ENCODE measurements at regions of chr14 and their contacts with region 1.

Region 1: GRCh38 chr14:77111043-77111442 is 13.0 kb downstream of the CIPC start:
- DNase-seq: no peak
- H3K4me3 Mint-ChIP-seq: no peak overlapping the region
- H3K27ac Mint-ChIP-seq: no peak overlapping the region
- H3K4me1 Mint-ChIP-seq: no peaks in the 10 kb centered on the region
- H3K27me3 Mint-ChIP-seq: no peaks in the 10 kb centered on the region

Region 2: DNA sequence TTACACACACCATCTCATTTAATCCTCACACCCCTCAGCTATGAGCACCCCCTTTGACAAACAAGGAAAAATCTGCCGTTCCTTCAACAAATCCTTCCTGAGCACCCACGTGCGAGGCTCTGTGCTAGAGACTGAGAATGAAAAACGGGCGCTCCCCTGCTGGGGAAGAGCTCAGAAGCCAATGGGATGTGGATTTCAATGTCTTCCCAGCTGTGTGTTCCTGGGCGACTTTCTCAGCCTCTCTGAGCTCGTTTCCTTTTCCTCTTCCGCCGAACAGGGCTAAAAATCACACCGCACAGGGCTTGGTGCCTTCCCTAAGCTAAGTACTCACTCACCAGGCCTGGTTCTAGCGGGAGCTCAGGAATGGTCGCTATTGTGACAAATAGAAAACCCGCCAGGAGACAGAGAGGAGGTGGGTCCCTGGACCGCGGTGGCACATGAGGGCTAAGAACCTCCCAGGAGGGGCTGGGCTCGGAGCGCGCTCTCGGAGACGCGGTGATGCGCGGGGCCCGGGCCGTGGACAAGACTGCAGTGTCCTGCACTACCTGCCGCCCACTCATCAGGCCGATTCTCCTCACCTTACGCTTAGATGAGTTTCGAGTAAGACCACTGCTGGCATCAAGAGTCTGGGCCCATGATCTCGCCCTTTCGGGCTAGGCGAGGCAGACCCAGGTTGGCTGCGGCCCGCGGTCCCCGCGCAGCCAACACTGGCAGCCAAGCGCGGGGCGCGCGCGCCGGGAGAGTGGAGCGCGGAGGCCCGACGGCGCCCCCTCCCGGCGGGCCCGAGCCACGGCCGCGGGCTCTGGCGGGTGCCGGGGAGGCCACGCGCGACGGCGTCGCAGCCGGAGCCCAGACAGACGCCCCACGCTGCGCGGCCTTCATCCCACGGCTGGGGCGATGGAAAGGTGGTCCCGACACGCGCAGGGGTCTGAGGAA is 13.6 kb after region 1 on chr14:
- CTCF ChIA-PET with region 1: interaction called, 23 read pairs
- POLR2A ChIA-PET with region 1: interaction called, 6 read pairs
- intact Hi-C with region 1: no loop called
- DNase-seq: peak; percentile 77
- H3K4me3 Mint-ChIP-seq: peak overlapping the region; percentile 82
- H3K27ac Mint-ChIP-seq: peak overlapping the region; percentile 73
- H3K4me1 Mint-ChIP-seq: peaks cover 50% of the 10 kb centered on the region
- H3K27me3 Mint-ChIP-seq: peaks cover 2% of the 10 kb centered on the region

Measured in activated CD4-positive, alpha-beta memory T cell treated with anti-CD3 and anti-CD28 coated beads for 36 hours (primary cell).